ENCODE measurements at regions of chr3 and their contacts with region 1.

Region 1: GRCh38 chr3:3200632-3201212 is 21.2 kb upstream of the CRBN start:
- DNase-seq: peak; percentile 19 to 71 (median 44)
- ATAC-seq: peak; percentile 85
- H3K4me3 ChIP-seq: no peak overlapping the region
- H3K27ac ChIP-seq: no peak overlapping the region
- H3K4me1 ChIP-seq: peaks cover 0 to 13% of the 10 kb centered on the region in 2 experiments; a peak in 3 of 5 replicates
- H3K27me3 ChIP-seq: no peaks in the 10 kb centered on the region
- CTCF ChIP-seq: peak; percentile 64 to 88 (median 76)
- EP300 ChIP-seq: no peak
- POLR2A ChIP-seq: no peak
- RAD21 ChIP-seq: peak; percentile 93 to 96

Region 2: DNA sequence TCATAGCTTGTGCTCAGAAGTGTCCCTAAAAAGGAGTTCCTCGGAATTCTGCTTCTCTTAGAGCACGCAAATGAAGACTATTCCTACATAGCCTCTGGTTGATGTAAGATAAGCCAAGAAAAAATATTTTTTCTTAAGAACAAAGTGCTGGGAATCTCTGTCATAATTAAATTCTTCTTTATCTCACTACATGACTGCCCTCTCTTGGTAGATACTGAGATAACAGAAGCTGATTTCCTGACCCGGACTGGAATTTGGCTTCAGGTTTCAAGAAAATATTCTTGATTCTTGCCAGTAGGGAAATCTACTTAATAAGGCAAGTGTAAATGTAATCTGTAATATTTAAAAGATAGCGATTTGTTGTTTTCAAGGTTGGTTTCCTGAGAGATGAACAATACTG is 1071.1 kb after region 1 on chr3:
- CTCF ChIA-PET with region 1: interaction called, 5 read pairs
- POLR2A ChIA-PET with region 1: no interaction called
- in situ Hi-C with region 1: no loop called
- intact Hi-C with region 1: loop called (anchors 5 kb)
- DNase-seq: peak; percentile 39 to 44 (median 40)
- ATAC-seq: peak; percentile 76
- H3K4me3 ChIP-seq: no peak overlapping the region
- H3K27ac ChIP-seq: no peak overlapping the region
- H3K4me1 ChIP-seq: no peaks in the 10 kb centered on the region
- H3K27me3 ChIP-seq: 0 out of 5 replicates have a peak, but pooled peaks cover 0 to 3% of the 10 kb centered on the region in 2 experiments
- CTCF ChIP-seq: peak; percentile 25 to 73 (median 56); a peak in 5 of 6 replicates
- EP300 ChIP-seq: no peak
- POLR2A ChIP-seq: no peak
- RAD21 ChIP-seq: peak; percentile 88 to 89

Region 3: DNA sequence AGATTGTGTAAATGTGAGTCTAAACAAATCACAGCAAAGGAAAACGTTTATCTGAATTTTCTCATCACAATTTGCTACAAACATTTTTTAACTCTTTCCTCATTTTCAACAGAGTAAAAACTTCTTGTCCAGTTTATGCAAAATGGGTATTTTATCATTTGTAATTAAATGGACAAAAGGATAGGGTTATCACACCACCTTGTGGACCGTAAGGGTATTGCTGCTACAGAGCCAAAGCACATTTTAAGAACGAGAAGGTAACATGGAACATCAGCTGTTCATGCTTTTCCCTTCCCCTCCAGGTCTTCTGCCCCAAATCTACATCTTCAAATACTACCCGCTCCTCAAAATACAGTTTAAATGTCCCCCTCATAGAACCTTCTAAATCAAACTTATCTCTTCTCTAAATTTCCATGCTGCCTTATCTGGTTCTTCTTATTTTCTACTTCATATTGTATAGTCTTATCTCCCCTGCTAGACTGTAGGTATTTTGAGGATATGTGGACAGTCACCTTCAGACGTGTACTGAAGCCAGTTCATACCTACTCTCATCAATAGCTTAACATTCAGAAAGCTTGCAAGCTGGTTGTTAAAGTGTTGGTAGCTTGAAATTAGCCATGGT is 1089.7 kb after region 1 on chr3:
- CTCF ChIA-PET with region 1: interaction called, 14 read pairs
- POLR2A ChIA-PET with region 1: interaction called, 4 read pairs
- in situ Hi-C with region 1: loop called (anchors 5 kb)
- intact Hi-C with region 1: loop called (anchors 1 kb)
- DNase-seq: peak; percentile 62 to 76 (median 69)
- ATAC-seq: peak; percentile 84
- H3K4me3 ChIP-seq: no peak overlapping the region
- H3K27ac ChIP-seq: no peak overlapping the region
- H3K4me1 ChIP-seq: no peaks in the 10 kb centered on the region
- H3K27me3 ChIP-seq: no peaks in the 10 kb centered on the region; a peak in 1 of 5 replicates
- CTCF ChIP-seq: peak; percentile 68 to 91 (median 86)
- EP300 ChIP-seq: no peak
- POLR2A ChIP-seq: no peak
- RAD21 ChIP-seq: peak; percentile 96 to 97

Measured in K562 (cell line).